SK-N-SH (cell line): ENCODE measurements at regions of chr16 and their contacts with region 1.

Region 1: GRCh38 chr16:1363501-1364041 is 11.8 kb downstream of the GNPTG start:
- DNase-seq: peak; percentile 88
- H3K4me3 ChIP-seq: no peak overlapping the region
- H3K27ac ChIP-seq: no peak overlapping the region
- H3K4me1 ChIP-seq: no peaks in the 10 kb centered on the region
- H3K27me3 ChIP-seq: no peaks in the 10 kb centered on the region
- CTCF ChIP-seq: peak; percentile 67
- EP300 ChIP-seq: no peak
- RAD21 ChIP-seq: peak; percentile 33; the same call in 1 of the 2 replicates

Region 2: DNA sequence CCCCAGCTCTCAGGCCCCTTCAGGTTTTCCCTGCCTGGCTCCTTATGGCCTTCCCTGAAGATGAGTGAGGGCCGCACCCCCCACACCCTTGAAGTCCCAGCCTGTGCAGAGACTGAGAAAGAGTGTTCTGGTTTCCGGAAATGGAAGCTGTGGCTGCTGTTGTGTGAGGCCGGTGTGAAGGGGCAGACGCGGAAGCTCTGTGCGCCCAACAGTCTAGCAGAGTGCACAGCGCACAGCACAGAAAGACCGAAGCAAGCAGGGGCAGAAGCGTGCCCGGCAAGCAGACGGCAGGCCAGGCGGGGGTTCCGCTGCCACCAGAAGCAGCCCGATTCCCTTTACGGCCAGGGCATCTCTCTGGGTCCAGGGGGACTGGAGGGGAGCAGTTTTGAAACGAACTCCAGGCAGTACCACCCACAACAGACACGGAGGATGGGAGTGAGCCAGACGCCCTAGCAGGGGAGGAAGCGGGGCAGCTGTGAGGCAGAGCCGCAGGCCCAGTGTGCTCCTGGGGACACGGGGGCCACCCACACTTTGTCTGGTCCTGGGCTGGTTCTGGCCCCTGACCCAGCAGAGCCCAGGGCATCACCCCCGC is 155.2 kb before region 1 on chr16:
- CTCF ChIA-PET with region 1: no interaction called
- POLR2A ChIA-PET with region 1: no interaction called
- DNase-seq: no peak
- H3K4me3 ChIP-seq: no peak overlapping the region
- H3K27ac ChIP-seq: no peak overlapping the region
- H3K4me1 ChIP-seq: no peaks in the 10 kb centered on the region
- H3K27me3 ChIP-seq: peaks cover 70% of the 10 kb centered on the region
- CTCF ChIP-seq: no peak
- EP300 ChIP-seq: no peak
- RAD21 ChIP-seq: no peak

Region 3: DNA sequence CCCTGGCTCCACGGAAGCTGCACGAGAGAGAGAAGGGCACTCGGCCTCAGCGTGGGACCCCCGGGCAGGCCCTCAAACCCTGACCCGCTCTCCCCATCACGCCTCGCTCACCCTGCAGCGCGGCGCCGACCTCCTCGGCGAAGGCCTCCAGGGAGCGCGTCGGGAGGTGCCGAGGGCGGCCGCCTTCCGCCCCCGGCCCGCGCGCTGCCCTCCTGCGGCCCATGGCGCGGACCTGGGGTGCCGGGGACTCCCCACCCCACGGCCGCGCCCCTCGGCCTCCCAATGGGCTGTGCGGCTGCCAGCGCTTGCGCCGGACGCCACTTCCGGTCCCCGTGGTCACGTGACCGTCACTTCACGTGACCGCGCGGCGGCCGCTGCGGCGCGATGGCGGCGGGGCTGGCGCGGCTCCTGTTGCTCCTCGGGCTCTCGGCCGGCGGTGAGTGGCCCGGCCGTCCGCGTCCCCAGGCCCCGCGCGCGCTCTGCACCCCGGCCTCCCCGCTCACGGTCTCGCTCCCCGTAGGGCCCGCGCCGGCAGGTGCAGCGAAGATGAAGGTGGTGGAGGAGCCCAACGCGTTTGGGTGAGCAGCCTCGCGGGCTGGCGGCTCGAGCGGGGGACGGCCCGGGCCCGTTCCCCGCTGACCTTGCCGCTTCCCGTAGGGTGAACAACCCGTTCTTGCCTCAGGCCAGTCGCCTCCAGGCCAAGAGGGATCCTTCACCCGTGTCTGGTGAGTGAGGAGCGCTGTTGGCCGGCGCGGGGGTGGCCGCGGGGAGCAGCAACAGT is 11.8 kb before region 1 on chr16 and contains the starts of genes GNPTG and TSR3:
- CTCF ChIA-PET with region 1: interaction called, 10 read pairs
- POLR2A ChIA-PET with region 1: interaction called, 3 read pairs
- DNase-seq: peak; percentile 96
- H3K4me3 ChIP-seq: peak within 1 kb of the TSS; percentile 98
- H3K27ac ChIP-seq: peak within 1 kb of the TSS in 1 of 2 experiments; percentile 56; a peak in 1 of 4 replicates
- H3K4me1 ChIP-seq: peaks cover 0 to 15% of the 10 kb centered on the region in 2 experiments; a peak in 2 of 4 replicates
- H3K27me3 ChIP-seq: no peaks in the 10 kb centered on the region
- CTCF ChIP-seq: no peak
- EP300 ChIP-seq: no peak; a peak in 1 of 4 replicates
- RAD21 ChIP-seq: no peak
- polyA plus RNA-seq, gene GNPTG: 113 and 114 TPM in 2 replicates
- polyA plus RNA-seq, gene TSR3: 67.6 and 87.3 TPM in 2 replicates

Region 4: GRCh38 chr16:1378804-1379303 is 15.3 kb after region 1 on chr16:
- CTCF ChIA-PET with region 1: interaction called, 39 read pairs
- POLR2A ChIA-PET with region 1: no interaction called
- DNase-seq: no peak
- H3K4me3 ChIP-seq: peak overlapping the region; percentile 53 to 61
- H3K27ac ChIP-seq: peak overlapping the region in 1 of 2 experiments; percentile 44; a peak in 2 of 4 replicates
- H3K4me1 ChIP-seq: peaks cover 9 to 12% of the 10 kb centered on the region in 2 experiments; a peak in 3 of 4 replicates
- H3K27me3 ChIP-seq: no peaks in the 10 kb centered on the region
- CTCF ChIP-seq: no peak
- EP300 ChIP-seq: no peak
- RAD21 ChIP-seq: no peak

Region 5: GRCh38 chr16:1656808-1657617 is 293.4 kb after region 1 on chr16:
- CTCF ChIA-PET with region 1: no interaction called
- POLR2A ChIA-PET with region 1: no interaction called
- DNase-seq: peak; percentile 53
- H3K4me3 ChIP-seq: no peak overlapping the region
- H3K27ac ChIP-seq: no peak overlapping the region
- H3K4me1 ChIP-seq: peaks cover 0 to 7% of the 10 kb centered on the region in 2 experiments; a peak in 1 of 4 replicates
- H3K27me3 ChIP-seq: no peaks in the 10 kb centered on the region
- CTCF ChIP-seq: no peak
- EP300 ChIP-seq: no peak
- RAD21 ChIP-seq: no peak

Region 6: GRCh38 chr16:1782352-1783091 is 419.0 kb after region 1 on chr16 and contains the starts of genes NUBP2 and SPSB3:
- CTCF ChIA-PET with region 1: no interaction called
- POLR2A ChIA-PET with region 1: no interaction called
- DNase-seq: peak; percentile 97
- H3K4me3 ChIP-seq: peak within 1 kb of the TSS; percentile 84 to 90
- H3K27ac ChIP-seq: peak within 1 kb of the TSS; percentile 48 to 53
- H3K4me1 ChIP-seq: peaks cover 0 to 8% of the 10 kb centered on the region in 2 experiments; a peak in 1 of 4 replicates
- H3K27me3 ChIP-seq: no peaks in the 10 kb centered on the region
- CTCF ChIP-seq: no peak
- EP300 ChIP-seq: no peak
- RAD21 ChIP-seq: no peak
- polyA plus RNA-seq, gene NUBP2: 73.2 and 75.4 TPM in 2 replicates
- polyA plus RNA-seq, gene SPSB3: 40.6 and 41.6 TPM in 2 replicates